Activated CD8-positive, alpha-beta T cell treated with anti-CD3 and anti-CD28 coated beads for 36 hours (primary cell): ENCODE measurements at regions of chr13 and their contacts with region 1.

Region 1: GRCh38 chr13:110455941-110456340 is 105.6 kb downstream of the RAB20 start:
- DNase-seq: peak; percentile 83
- ATAC-seq: peak; percentile 99
- H3K4me3 Mint-ChIP-seq: peak overlapping the region; percentile 14
- H3K27ac Mint-ChIP-seq: no peak overlapping the region
- H3K4me1 Mint-ChIP-seq: peaks cover 3% of the 10 kb centered on the region
- H3K27me3 Mint-ChIP-seq: peaks cover 26% of the 10 kb centered on the region
- CTCF ChIP-seq: peak; percentile 82

Region 2: GRCh38 chr13:110444226-110444653 is 11.7 kb before region 1 on chr13:
- CTCF ChIA-PET with region 1: interaction called, 11 read pairs
- POLR2A ChIA-PET with region 1: no interaction called
- intact Hi-C with region 1: no loop called
- DNase-seq: no peak
- ATAC-seq: no peak
- H3K4me3 Mint-ChIP-seq: no peak overlapping the region
- H3K27ac Mint-ChIP-seq: no peak overlapping the region
- H3K4me1 Mint-ChIP-seq: peaks cover 2% of the 10 kb centered on the region
- H3K27me3 Mint-ChIP-seq: peaks cover 22% of the 10 kb centered on the region
- CTCF ChIP-seq: no peak